Activated naive CD8-positive, alpha-beta T cell treated with anti-CD3 and anti-CD28 coated beads, Interleukin-2, amount 10 ng/mL, durations not matched to agents 7 days and 5 days (primary cell): ENCODE measurements at regions of chr11 and their contacts with region 1.

Region 1: GRCh38 chr11:9757809-9758636 is 94.1 kb downstream of the SWAP70 start:
- DNase-seq: peak; percentile 97
- ATAC-seq: peak; percentile 83
- H3K4me3 Mint-ChIP-seq: peak overlapping the region; percentile 81
- H3K27ac Mint-ChIP-seq: peak overlapping the region; percentile 80
- H3K4me1 Mint-ChIP-seq: peaks cover 32% of the 10 kb centered on the region
- H3K27me3 Mint-ChIP-seq: no peaks in the 10 kb centered on the region

Region 2: GRCh38 chr11:10304495-10305213 is 546.6 kb after region 1 on chr11 and contains the start of gene ADM:
- POLR2A ChIA-PET with region 1: interaction called, 10 read pairs
- DNase-seq: peak; percentile 62
- ATAC-seq: peak; percentile 9
- H3K4me3 Mint-ChIP-seq: peak within 1 kb of the TSS; percentile 95
- H3K27ac Mint-ChIP-seq: peak within 1 kb of the TSS; percentile 60
- H3K4me1 Mint-ChIP-seq: peaks cover 38% of the 10 kb centered on the region
- H3K27me3 Mint-ChIP-seq: peaks cover 56% of the 10 kb centered on the region
- total RNA-seq, gene ADM: 1.5 to 2.3 TPM